HCT116 (cell line): ENCODE measurements at regions of chr11 and their contacts with region 1.

Region 1: GRCh38 chr11:119356349-119357031 is 10.0 kb upstream of the MFRP start:
- DNase-seq: peak; percentile 60
- ATAC-seq: peak; percentile 87
- H3K4me3 ChIP-seq: peak overlapping the region; percentile 62 to 66
- H3K27ac ChIP-seq: peak overlapping the region; percentile 68
- H3K4me1 ChIP-seq: peaks cover 17 to 30% of the 10 kb centered on the region in 2 experiments
- H3K27me3 ChIP-seq: no peaks in the 10 kb centered on the region
- CTCF ChIP-seq: peak; percentile 84 to 97 (median 89)
- POLR2A ChIP-seq: no peak
- RAD21 ChIP-seq: peak; percentile 94

Region 2: GRCh38 chr11:119205574-119206510 is 150.6 kb before region 1 on chr11 and contains the start of gene CBL:
- CTCF ChIA-PET with region 1: no interaction called
- POLR2A ChIA-PET with region 1: no interaction called
- RAD21 ChIA-PET with region 1: no interaction called
- intact Hi-C with region 1: no loop called
- DNase-seq: peak; percentile 78
- ATAC-seq: peak; percentile 88
- H3K4me3 ChIP-seq: peak within 1 kb of the TSS; percentile 72 to 96
- H3K27ac ChIP-seq: peak within 1 kb of the TSS; percentile 80
- H3K4me1 ChIP-seq: peaks cover 10 to 16% of the 10 kb centered on the region in 2 experiments
- H3K27me3 ChIP-seq: no peaks in the 10 kb centered on the region
- CTCF ChIP-seq: peak; percentile 69 to 88 (median 85)
- POLR2A ChIP-seq: peak; percentile 21
- RAD21 ChIP-seq: peak; percentile 47
- total RNA-seq, gene CBL: 31.1 TPM

Region 3: DNA sequence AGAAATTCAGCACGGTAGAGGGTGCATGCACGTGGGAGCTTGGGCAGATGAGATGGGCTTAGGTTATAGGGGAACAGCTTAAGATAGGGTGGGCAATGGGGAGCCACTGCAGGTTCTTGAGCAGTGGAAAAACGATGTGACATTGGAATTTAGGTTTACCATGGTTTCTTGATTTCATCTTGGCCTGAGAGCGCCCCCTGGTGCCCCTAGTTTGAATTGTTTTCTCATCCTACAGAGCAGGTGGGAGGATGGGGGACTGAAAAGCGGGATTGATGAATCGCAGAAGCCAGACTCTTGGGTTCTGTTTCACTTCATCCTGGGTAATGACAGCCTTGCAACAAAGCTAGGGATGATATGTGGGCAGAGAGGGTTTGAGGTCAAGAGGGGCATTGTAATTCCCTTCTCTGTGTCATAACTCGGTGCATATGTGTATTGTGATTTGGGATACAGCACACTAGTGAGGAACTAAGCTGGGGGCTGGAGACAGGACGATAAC is 32.9 kb before region 1 on chr11:
- CTCF ChIA-PET with region 1: interaction called, 13 read pairs
- POLR2A ChIA-PET with region 1: no interaction called
- RAD21 ChIA-PET with region 1: no interaction called
- intact Hi-C with region 1: no loop called
- DNase-seq: peak; percentile 51
- ATAC-seq: peak; percentile 71
- H3K4me3 ChIP-seq: no peak overlapping the region
- H3K27ac ChIP-seq: no peak overlapping the region
- H3K4me1 ChIP-seq: peaks cover 0 to 10% of the 10 kb centered on the region in 2 experiments; a peak in 1 of 4 replicates
- H3K27me3 ChIP-seq: no peaks in the 10 kb centered on the region
- CTCF ChIP-seq: peak; percentile 76 to 90 (median 85)
- POLR2A ChIP-seq: no peak
- RAD21 ChIP-seq: peak; percentile 84

Region 4: DNA sequence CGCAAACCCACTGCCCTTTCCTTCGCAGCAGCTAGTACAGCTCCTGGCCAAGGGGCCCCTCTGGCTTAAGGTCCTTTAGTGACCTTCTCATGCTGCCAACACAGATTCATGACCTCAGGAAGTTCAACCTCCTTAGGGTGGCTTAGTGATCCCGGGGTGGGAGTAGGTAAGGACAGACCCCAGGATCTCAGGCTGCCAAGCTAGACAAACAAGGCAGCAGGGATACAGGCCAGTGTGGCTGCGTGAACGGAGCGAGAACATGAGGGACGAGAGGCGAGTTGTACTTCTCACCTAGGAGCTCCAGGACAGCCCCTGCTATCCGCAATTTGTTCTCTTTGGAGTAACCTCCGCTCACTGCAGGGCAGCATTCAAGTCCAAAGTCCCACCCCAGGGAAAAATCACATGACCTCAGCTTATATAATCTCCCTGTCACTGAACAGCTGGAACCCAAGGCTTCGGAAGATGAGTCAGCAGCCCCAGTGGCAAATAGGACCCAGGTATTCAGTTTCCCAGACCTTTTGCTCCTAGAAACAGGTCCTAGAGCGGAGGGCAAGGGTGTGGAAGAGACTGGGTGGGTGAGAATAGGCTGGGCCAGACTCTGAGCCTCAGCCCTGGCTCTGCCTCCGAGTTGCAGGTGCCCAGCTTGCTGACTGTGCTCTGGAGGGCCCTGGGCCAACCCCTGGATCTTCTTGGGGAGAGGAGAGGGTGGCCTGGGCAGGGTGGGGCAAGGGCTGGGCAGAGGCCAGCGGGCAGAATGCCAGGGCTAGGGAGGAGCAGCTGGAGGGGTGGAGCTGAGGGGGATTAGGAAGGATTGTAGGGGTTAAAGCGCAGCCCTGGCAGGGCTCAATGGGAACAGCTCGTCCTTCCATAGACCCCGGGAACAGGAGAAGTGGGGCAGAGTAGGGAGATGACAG is 11.9 kb after region 1 on chr11:
- CTCF ChIA-PET with region 1: interaction called, 54 read pairs
- POLR2A ChIA-PET with region 1: interaction called, 3 read pairs
- RAD21 ChIA-PET with region 1: interaction called, 3 read pairs
- intact Hi-C with region 1: no loop called
- DNase-seq: no peak
- ATAC-seq: peak; percentile 21; the same call in 1 of the 2 replicates
- H3K4me3 ChIP-seq: no peak overlapping the region
- H3K27ac ChIP-seq: no peak overlapping the region
- H3K4me1 ChIP-seq: peaks cover 38 to 57% of the 10 kb centered on the region in 2 experiments
- H3K27me3 ChIP-seq: peaks cover 6% of the 10 kb centered on the region; the same call in 1 of the 2 replicates
- CTCF ChIP-seq: no peak
- POLR2A ChIP-seq: no peak
- RAD21 ChIP-seq: no peak

Region 5: GRCh38 chr11:119373921-119374631 is 17.6 kb after region 1 on chr11:
- CTCF ChIA-PET with region 1: interaction called, 54 read pairs
- POLR2A ChIA-PET with region 1: interaction called, 3 read pairs
- RAD21 ChIA-PET with region 1: interaction called, 3 to 4 read pairs
- intact Hi-C with region 1: loop called (anchors 1 kb)
- DNase-seq: no peak
- ATAC-seq: peak; percentile 80
- H3K4me3 ChIP-seq: no peak overlapping the region
- H3K27ac ChIP-seq: no peak overlapping the region
- H3K4me1 ChIP-seq: peaks cover 19 to 39% of the 10 kb centered on the region in 2 experiments
- H3K27me3 ChIP-seq: no peaks in the 10 kb centered on the region
- CTCF ChIP-seq: peak; percentile 94 to 96 (median 95)
- POLR2A ChIP-seq: no peak
- RAD21 ChIP-seq: peak; percentile 96

Region 6: DNA sequence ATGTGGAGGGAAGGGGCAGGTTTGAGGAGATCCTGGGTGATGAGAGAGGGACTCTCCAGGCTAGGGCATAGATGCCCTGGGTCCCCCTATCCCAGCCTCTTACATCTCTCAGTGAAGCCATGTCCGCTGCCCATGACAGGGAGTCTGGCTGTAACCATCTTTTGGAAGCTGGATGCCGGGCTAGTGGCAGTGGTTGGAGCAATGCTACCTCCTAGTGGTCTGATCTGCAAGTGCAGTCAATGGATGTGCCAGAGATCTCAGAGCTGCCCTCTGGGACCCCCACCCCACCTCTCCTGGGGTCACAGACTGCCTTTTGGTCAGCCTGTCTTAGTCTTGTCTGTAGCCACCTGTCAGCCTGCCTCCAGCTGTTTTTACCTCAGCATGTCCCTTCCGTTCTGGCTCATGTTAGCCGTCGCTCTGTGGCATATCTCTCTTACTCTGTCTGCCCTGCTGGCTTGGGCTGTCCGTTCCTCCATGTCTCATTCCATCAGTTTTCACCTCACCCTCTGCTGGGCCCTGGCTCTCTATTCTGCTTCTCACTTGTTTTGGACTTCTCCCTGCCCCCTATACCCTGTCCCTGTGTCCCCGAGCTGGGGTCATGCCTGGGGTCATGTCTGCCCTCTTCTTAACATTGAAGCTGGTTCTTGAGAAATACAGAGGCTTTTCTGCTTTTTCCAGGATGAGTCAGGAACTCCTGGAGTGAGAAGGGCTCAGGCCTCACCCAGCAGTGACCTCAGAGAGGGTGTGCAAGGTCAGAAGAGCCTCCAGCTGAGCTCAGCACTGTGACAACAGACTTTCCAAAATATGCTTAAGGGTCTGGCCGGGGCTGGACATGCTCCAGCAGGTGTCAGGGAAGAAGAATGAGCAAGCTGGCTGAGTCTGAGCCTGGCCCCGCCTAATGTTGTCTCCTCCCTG is 118.4 kb after region 1 on chr11:
- CTCF ChIA-PET with region 1: interaction called, 33 read pairs
- POLR2A ChIA-PET with region 1: no interaction called
- RAD21 ChIA-PET with region 1: interaction called, 6 to 7 read pairs
- intact Hi-C with region 1: loop called (anchors 1 kb)
- DNase-seq: no peak
- ATAC-seq: peak; percentile 78
- H3K4me3 ChIP-seq: no peak overlapping the region
- H3K27ac ChIP-seq: no peak overlapping the region
- H3K4me1 ChIP-seq: peaks cover 0 to 25% of the 10 kb centered on the region in 2 experiments; a peak in 1 of 4 replicates
- H3K27me3 ChIP-seq: no peaks in the 10 kb centered on the region
- CTCF ChIP-seq: peak; percentile 80 to 91 (median 88)
- POLR2A ChIP-seq: no peak
- RAD21 ChIP-seq: peak; percentile 90